Stomach (tissue), 19 donors: ENCODE measurements at regions of chr21 and their contacts with region 1.

Region 1: DNA sequence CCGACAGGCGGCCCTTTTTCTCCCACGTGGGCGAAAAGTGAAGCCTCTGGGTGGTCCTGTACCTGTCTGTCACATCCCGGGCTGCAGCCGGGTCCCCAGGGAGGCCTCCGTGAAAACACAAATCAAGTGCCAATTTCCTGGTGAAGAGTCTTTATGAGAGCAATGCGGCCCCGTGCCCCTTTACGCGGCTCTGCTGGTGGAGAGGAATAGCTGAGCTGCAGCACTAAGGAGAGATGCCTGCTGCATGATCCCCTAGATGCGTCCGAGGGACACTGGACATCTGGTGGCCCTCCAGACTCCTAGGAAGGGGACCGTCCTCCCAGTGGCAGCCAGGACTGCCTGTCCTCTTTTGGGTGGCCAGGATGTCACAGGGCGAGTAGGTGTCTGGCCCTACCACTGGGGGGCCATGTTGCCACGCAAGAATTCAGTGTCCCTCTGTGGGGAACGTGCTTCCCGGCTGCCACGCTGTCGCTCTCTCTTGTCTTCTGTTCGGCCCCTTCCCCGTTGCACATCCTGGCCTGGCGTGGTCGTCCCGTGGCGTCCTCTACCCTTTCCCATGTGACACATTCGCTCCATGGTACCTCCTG is 38.7 kb downstream of the COL18A1 start:
- DNase-seq: no peak
- H3K4me3 ChIP-seq: no peak overlapping the region
- H3K27ac ChIP-seq: no peak overlapping the region
- H3K4me1 ChIP-seq: peaks cover 10 to 14% (median 12%) of the 10 kb centered on the region in 4 donors
- H3K27me3 ChIP-seq: peaks cover 0 to 14% (median 0%) of the 10 kb centered on the region in 3 donors
- CTCF ChIP-seq: no peak
- EP300 ChIP-seq: no peak
- POLR2A ChIP-seq: no peak

Region 2: GRCh38 chr21:45292399-45293219 is 151.1 kb before region 1 on chr21:
- intact Hi-C with region 1: loop called (anchors 5 kb)
- DNase-seq: peak; percentile 84 to 96
- H3K4me3 ChIP-seq: peak overlapping the region in 1 of 4 donors; percentile 31
- H3K27ac ChIP-seq: peak overlapping the region in 4 of 5 donors; percentile 88 to 93 (median 90)
- H3K4me1 ChIP-seq: peaks cover 39 to 53% (median 49%) of the 10 kb centered on the region in 4 donors
- H3K27me3 ChIP-seq: peaks cover 0 to 24% (median 12%) of the 10 kb centered on the region in 3 donors
- CTCF ChIP-seq: peak in 5 of 7 experiments; percentile 95 to 98 (median 98)
- EP300 ChIP-seq: no peak
- POLR2A ChIP-seq: no peak

Region 3: DNA sequence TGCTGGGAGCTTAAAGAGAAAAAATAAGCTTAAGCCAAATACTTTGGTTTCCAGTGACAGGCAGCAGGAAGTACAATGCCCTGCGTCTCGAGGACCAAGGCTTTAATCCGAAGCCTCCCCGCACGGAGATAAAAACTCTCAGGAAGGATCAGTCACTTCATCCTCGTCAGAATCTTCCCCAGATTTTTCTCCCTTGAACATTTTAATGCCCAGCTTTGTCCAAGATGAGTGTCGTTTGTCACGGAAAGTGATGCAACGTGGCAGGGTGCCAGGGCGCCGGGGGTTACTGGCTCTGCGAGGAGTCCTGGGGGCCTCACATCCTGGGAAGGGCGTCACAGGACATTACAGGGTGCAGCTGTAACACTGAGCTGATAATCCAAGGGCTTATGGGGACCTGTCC is 174.6 kb after region 1 on chr21:
- intact Hi-C with region 1: no loop called
- DNase-seq: peak in 1 of 2 donors; percentile 43
- H3K4me3 ChIP-seq: no peak overlapping the region
- H3K27ac ChIP-seq: no peak overlapping the region
- H3K4me1 ChIP-seq: no peaks in the 10 kb centered on the region
- H3K27me3 ChIP-seq: peaks cover 0 to 64% (median 27%) of the 10 kb centered on the region in 3 donors
- CTCF ChIP-seq: no peak
- EP300 ChIP-seq: no peak
- POLR2A ChIP-seq: no peak